Activated naive CD4-positive, alpha-beta T cell treated with anti-CD3 and anti-CD28 coated beads for 36 hours (primary cell): ENCODE measurements at regions of chr2 and their contacts with region 1.

Region 1: GRCh38 chr2:24971536-24972314 is at the start of gene DNAJC27:
- DNase-seq: peak; percentile 98
- H3K4me3 Mint-ChIP-seq: peak within 1 kb of the TSS; percentile 99
- H3K27ac Mint-ChIP-seq: peak within 1 kb of the TSS; percentile 100
- H3K4me1 Mint-ChIP-seq: peaks cover 20% of the 10 kb centered on the region
- H3K27me3 Mint-ChIP-seq: no peaks in the 10 kb centered on the region
- total RNA-seq, gene DNAJC27: 5.3 to 6.0 TPM

Region 2: GRCh38 chr2:23926750-23927571 is 1044.8 kb before region 1 on chr2 and contains the start of gene ATAD2B:
- CTCF ChIA-PET with region 1: no interaction called
- intact Hi-C with region 1: loop called (anchors 5 kb)
- DNase-seq: peak; percentile 93
- H3K4me3 Mint-ChIP-seq: peak within 1 kb of the TSS; percentile 96
- H3K27ac Mint-ChIP-seq: peak within 1 kb of the TSS; percentile 99
- H3K4me1 Mint-ChIP-seq: peaks cover 36% of the 10 kb centered on the region
- H3K27me3 Mint-ChIP-seq: no peaks in the 10 kb centered on the region
- total RNA-seq, gene ATAD2B: 12.9 to 15.4 TPM

Region 3: GRCh38 chr2:24577481-24577880 is 394.2 kb before region 1 on chr2:
- CTCF ChIA-PET with region 1: no interaction called
- intact Hi-C with region 1: loop called (anchors 5 kb)
- DNase-seq: no peak
- H3K4me3 Mint-ChIP-seq: no peak overlapping the region
- H3K27ac Mint-ChIP-seq: peak overlapping the region; percentile 69
- H3K4me1 Mint-ChIP-seq: peaks cover 74% of the 10 kb centered on the region
- H3K27me3 Mint-ChIP-seq: no peaks in the 10 kb centered on the region

Region 4: GRCh38 chr2:24984912-24985311 is 13.2 kb after region 1 on chr2:
- CTCF ChIA-PET with region 1: interaction called, 13 read pairs
- intact Hi-C with region 1: no loop called
- DNase-seq: no peak
- H3K4me3 Mint-ChIP-seq: no peak overlapping the region
- H3K27ac Mint-ChIP-seq: no peak overlapping the region
- H3K4me1 Mint-ChIP-seq: no peaks in the 10 kb centered on the region
- H3K27me3 Mint-ChIP-seq: no peaks in the 10 kb centered on the region

Region 5: DNA sequence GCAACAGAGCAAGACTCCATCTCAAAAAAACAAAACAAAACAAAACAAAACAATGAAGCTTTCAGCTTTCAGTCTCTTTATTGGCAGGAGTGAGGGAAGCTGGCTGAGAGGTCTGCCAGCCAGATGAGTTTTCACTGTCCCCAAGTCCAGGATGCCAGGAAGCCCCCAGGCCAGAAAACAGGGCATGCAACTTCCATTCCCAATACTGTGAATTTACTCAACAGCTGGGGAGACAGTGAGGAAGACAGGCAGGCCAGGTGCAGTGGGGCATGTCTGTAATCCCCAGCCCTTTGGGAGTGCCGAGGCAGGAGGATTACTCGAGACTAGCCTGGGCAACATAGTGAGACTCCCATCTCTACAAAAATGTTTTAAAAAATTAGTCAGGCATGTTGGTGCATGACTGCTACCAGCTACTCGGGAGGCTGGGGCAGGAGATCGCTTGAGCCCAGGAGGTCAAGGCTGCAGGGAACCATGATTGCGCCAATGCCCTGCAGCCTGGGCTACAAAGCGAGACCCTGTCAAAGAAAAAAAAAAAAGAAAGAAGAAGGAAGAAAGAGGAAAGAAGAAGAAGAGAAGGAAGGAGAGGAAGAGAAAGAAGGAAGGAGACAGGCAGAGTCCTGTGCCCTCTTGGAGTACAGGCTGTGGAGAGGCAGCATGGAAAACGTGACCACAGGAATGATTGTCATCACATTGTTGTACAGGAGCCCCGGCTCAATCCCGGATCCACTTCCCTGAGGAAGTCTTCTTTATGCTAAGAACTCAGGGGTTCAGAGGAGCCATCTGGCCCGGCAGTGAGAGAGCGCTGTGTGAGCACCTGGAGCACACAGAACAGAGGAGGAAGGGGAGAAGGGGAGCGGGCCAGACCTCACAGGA is 225.8 kb after region 1 on chr2:
- CTCF ChIA-PET with region 1: interaction called, 15 read pairs
- intact Hi-C with region 1: loop called (anchors 1 kb)
- DNase-seq: no peak
- H3K4me3 Mint-ChIP-seq: no peak overlapping the region
- H3K27ac Mint-ChIP-seq: no peak overlapping the region
- H3K4me1 Mint-ChIP-seq: peaks cover 6% of the 10 kb centered on the region
- H3K27me3 Mint-ChIP-seq: no peaks in the 10 kb centered on the region

Region 6: DNA sequence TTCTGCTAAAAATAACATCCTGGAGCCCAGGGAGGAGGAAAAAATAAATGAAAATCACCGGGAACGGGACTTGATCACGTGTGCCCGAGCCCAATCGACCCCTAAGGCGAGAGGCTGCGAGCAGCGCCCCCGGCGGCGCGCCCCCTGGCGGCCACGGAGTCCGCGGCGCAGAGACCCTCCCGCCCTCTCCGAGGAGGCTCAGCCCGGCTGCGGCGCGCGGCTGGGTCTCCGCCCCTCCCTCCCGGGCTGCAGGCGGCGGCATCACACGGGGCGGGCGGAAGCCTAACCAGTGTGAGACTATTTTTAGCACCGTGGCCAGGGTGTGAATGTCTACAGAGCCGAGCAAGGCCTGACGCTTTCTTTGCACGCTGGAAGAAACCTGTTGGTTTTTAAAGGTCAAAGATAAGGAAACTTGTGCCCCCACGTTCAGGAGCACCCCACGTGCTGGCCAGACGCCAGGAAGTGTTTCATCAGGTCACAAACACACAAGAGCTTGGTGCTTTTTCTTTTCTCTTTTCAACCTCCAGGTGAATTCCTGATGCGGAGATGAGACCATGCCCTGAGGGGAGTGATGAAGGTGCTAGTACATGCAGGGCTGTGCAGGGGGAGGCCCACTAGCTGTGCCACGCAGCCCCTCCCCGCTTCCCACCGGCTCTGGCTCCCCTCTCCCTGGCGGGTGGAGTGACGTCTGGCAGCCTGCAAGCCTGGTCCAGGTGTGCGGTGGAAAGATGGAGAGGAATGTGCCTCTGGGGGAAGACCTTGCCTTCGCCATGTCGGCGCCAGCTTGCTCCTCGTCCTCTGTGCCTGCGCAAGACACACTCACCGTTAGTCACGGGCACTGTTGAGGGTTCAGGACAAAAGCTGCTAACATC is 405.3 kb after region 1 on chr2:
- CTCF ChIA-PET with region 1: no interaction called
- intact Hi-C with region 1: loop called (anchors 5 kb)
- DNase-seq: peak; percentile 96
- H3K4me3 Mint-ChIP-seq: peak overlapping the region; percentile 64
- H3K27ac Mint-ChIP-seq: peak overlapping the region; percentile 96
- H3K4me1 Mint-ChIP-seq: peaks cover 28% of the 10 kb centered on the region
- H3K27me3 Mint-ChIP-seq: no peaks in the 10 kb centered on the region

Region 7: GRCh38 chr2:25878361-25879132 is 906.8 kb after region 1 on chr2 and contains the start of gene ASXL2:
- CTCF ChIA-PET with region 1: no interaction called
- intact Hi-C with region 1: loop called (anchors 2 kb)
- DNase-seq: peak; percentile 97
- H3K4me3 Mint-ChIP-seq: peak within 1 kb of the TSS; percentile 91
- H3K27ac Mint-ChIP-seq: peak within 1 kb of the TSS; percentile 96
- H3K4me1 Mint-ChIP-seq: peaks cover 43% of the 10 kb centered on the region
- H3K27me3 Mint-ChIP-seq: no peaks in the 10 kb centered on the region
- total RNA-seq, gene ASXL2: 25.2 to 29.1 TPM